Posterior cingulate gyrus (tissue), 11 donors: ENCODE measurements at regions of chr1 and their contacts with region 1.

Region 1: GRCh38 chr1:109041621-109042468 is at the start of gene WDR47:
- DNase-seq: peak; percentile 86 to 100 (median 97)

Region 2: GRCh38 chr1:109075531-109076490 is 34.0 kb after region 1 on chr1 and contains the start of gene TAF13:
- intact Hi-C with region 1: loop called (anchors 5 kb)
- DNase-seq: peak; percentile 93 to 100 (median 96)

Region 3: GRCh38 chr1:109090196-109091077 is 48.6 kb after region 1 on chr1 and contains the start of gene TMEM167B:
- intact Hi-C with region 1: loop called (anchors 5 kb)
- DNase-seq: peak; percentile 88 to 99 (median 94)

Region 4: GRCh38 chr1:109133815-109134214 is 92.0 kb after region 1 on chr1:
- intact Hi-C with region 1: no loop called
- DNase-seq: peak; percentile 22 to 92 (median 64)